HEK293 (cell line): ENCODE measurements at regions of chr19 and their contacts with region 1.

Region 1: DNA sequence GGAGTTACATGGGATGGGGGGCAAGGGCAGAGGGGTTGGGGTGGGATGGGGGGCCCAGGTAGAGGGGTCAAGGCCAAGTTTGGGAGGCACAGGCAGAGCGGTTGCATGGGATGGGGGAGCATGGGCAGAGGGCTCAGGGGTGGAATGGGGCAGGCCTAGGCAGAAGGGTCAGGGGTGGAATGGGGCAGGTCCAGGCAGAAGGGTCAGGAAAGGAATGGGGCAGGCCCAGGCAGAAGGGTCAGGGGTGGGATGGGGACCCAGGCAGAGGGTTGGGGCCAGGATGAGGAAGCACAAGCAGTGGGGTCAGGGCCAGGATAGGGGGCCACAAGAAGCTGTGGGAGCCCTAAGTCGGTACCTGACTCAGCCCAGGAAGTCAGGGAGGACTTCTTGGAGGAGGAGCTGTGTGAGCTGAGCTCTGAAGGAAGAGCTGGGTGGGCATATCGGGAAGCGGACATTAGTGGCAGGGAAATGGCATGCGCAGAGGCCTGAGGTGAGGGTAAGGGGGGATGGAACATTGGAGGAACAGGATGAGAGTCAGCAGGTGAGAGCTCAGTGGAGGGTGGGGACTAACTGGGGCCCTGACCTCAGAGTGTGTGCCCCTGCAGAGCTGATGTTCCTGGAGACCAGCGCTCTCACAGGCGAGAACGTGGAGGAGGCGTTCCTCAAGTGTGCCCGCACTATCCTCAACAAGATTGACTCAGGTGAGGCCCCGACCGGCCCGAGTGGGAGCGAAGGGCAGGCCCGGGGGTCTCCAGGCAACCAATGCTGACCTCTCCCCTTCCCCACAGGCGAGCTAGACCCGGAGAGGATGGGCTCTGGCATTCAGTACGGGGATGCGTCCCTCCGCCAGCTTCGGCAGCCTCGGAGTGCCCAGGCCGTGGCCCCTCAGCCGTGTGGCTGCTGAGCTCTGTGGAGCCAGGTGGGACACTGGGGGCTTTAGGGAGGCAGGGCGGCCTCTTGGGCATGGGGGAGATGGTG is 8.3 kb downstream of the RAB4B start:
- H3K4me3 ChIP-seq: no peak overlapping the region
- H3K27ac ChIP-seq: no peak overlapping the region
- H3K4me1 ChIP-seq: no peaks in the 10 kb centered on the region
- CTCF ChIP-seq: no peak

Region 2: DNA sequence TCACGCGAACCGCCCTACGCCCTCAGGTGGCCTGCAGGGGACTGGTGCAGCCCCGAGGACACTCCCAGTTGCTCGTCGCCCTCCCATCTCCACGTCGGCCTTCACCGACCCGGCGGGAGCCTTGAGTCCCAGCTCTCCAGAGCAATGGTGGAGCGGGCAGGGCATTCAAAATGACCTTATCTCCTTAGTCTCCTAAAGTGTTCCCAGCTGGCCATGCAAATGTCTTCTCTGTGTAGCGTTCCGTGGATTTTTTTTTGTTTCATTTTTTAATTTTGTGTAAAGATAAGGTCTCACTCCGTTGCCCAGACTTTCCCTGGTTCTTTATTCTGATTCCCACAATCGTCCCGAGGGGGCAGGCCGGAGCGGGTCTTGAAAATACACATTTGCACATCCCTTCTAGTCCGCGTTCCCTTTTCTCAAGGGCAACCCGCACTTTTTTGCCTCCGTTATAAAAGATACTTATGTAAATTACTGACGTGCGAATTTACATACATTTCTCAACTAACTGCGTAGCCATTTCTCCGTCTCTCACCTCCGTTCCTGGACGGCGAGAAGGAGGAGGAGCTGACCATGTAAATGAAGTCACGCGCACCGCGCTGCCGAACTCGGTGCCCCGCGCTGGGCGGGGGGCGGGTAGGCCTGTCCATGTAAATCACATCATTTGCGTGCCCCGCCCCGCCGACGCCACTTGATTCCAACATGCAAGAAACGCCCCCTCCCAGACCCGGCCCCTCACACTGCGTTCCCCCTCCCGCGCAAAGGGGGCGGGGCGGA is 12.1 kb after region 1 on chr19:
- CTCF ChIA-PET with region 1: interaction called, 12 read pairs
- POLR2A ChIA-PET with region 1: interaction called, 3 read pairs
- H3K4me3 ChIP-seq: peak overlapping the region; percentile 44
- H3K27ac ChIP-seq: peak overlapping the region; percentile 92
- H3K4me1 ChIP-seq: peaks cover 39% of the 10 kb centered on the region
- CTCF ChIP-seq: peak; percentile 94